ENCODE measurements at regions of chr12 and their contacts with region 1.

Region 1: GRCh38 chr12:11730299-11731041 is 81.0 kb downstream of the ETV6 start:
- DNase-seq: peak; percentile 27
- H3K4me3 Mint-ChIP-seq: no peak overlapping the region
- H3K27ac Mint-ChIP-seq: peak overlapping the region; percentile 85
- H3K4me1 Mint-ChIP-seq: peaks cover 86% of the 10 kb centered on the region
- H3K27me3 Mint-ChIP-seq: no peaks in the 10 kb centered on the region

Region 2: GRCh38 chr12:11702959-11703358 is 27.5 kb before region 1 on chr12:
- CTCF ChIA-PET with region 1: no interaction called
- intact Hi-C with region 1: loop called (anchors 1 kb)
- DNase-seq: peak; percentile 14
- H3K4me3 Mint-ChIP-seq: no peak overlapping the region
- H3K27ac Mint-ChIP-seq: peak overlapping the region; percentile 76
- H3K4me1 Mint-ChIP-seq: peaks cover 49% of the 10 kb centered on the region
- H3K27me3 Mint-ChIP-seq: no peaks in the 10 kb centered on the region

Region 3: DNA sequence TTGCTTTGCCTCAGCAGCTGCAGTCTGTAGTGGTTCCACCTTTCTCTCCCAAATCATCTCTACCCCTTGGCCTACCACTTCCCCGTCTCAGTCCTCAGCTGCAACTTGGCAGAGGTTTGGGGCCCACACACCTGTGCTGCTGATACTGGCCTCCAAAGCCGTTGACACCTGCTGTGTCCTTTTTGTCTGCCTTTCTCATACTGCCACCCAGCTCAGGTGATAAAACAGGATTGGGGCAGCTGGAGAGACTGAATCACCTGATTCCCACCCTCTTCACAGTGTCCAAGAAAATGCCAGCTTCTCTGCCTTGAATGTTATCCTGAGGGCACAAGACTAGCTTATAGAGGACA is 22.7 kb after region 1 on chr12:
- CTCF ChIA-PET with region 1: no interaction called
- intact Hi-C with region 1: no loop called
- DNase-seq: no peak
- H3K4me3 Mint-ChIP-seq: no peak overlapping the region
- H3K27ac Mint-ChIP-seq: peak overlapping the region; percentile 0
- H3K4me1 Mint-ChIP-seq: peaks cover 3% of the 10 kb centered on the region
- H3K27me3 Mint-ChIP-seq: no peaks in the 10 kb centered on the region

Region 4: GRCh38 chr12:11855983-11856374 is 125.5 kb after region 1 on chr12:
- CTCF ChIA-PET with region 1: interaction called, 11 read pairs
- intact Hi-C with region 1: no loop called
- DNase-seq: no peak
- H3K4me3 Mint-ChIP-seq: no peak overlapping the region
- H3K27ac Mint-ChIP-seq: peak overlapping the region; percentile 10
- H3K4me1 Mint-ChIP-seq: peaks cover 33% of the 10 kb centered on the region
- H3K27me3 Mint-ChIP-seq: no peaks in the 10 kb centered on the region

Measured in activated naive CD4-positive, alpha-beta T cell treated with anti-CD3 and anti-CD28 coated beads for 36 hours (primary cell).